Endothelial cell of umbilical vein (primary cell): ENCODE measurements at regions of chr16 and their contacts with region 1.

Region 1: DNA sequence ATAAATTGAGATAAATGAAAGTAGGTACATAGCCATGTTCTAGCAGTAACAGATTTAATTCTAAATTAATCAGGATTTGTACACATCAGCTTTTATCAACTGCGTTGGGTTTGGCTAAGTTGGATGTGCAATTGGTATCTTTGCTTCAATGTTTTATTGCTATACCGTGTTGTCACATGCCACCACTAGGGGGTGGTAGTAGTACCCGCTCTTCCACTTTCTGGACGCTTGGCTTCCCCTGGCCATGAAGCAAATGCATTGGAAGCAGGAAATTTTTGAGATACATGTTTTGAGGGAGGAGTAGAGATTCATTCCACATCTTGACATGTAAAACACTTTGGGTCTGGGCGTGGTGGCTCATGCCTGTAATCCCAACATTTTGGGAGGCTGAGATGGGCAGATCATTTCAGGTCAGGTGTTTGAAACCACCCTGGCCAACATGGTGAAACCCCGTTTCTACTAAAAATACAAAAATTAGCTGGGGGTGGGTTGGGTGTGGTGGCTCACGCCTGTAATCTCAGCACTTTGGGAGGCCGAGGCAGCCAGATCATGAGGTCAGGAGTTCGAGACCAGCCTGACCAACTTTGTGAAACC is 58.6 kb downstream of the EMP2 start:
- DNase-seq: peak; percentile 49
- H3K4me3 ChIP-seq: no peak overlapping the region
- H3K27ac ChIP-seq: no peak overlapping the region
- H3K4me1 ChIP-seq: no peaks in the 10 kb centered on the region
- H3K27me3 ChIP-seq: no peaks in the 10 kb centered on the region
- CTCF ChIP-seq: peak; percentile 69 to 82
- POLR2A ChIP-seq: no peak

Region 2: GRCh38 chr16:10534748-10535147 is 13.0 kb after region 1 on chr16:
- CTCF ChIA-PET with region 1: interaction called, 16 read pairs
- POLR2A ChIA-PET with region 1: no interaction called
- dilution Hi-C with region 1: no loop called
- intact Hi-C with region 1: no loop called
- DNase-seq: no peak
- H3K4me3 ChIP-seq: no peak overlapping the region
- H3K27ac ChIP-seq: no peak overlapping the region
- H3K4me1 ChIP-seq: no peaks in the 10 kb centered on the region
- H3K27me3 ChIP-seq: no peaks in the 10 kb centered on the region
- CTCF ChIP-seq: no peak
- POLR2A ChIP-seq: no peak